Caco-2 (cell line): ENCODE measurements at regions of chr1 and their contacts with region 1.

Region 1: DNA sequence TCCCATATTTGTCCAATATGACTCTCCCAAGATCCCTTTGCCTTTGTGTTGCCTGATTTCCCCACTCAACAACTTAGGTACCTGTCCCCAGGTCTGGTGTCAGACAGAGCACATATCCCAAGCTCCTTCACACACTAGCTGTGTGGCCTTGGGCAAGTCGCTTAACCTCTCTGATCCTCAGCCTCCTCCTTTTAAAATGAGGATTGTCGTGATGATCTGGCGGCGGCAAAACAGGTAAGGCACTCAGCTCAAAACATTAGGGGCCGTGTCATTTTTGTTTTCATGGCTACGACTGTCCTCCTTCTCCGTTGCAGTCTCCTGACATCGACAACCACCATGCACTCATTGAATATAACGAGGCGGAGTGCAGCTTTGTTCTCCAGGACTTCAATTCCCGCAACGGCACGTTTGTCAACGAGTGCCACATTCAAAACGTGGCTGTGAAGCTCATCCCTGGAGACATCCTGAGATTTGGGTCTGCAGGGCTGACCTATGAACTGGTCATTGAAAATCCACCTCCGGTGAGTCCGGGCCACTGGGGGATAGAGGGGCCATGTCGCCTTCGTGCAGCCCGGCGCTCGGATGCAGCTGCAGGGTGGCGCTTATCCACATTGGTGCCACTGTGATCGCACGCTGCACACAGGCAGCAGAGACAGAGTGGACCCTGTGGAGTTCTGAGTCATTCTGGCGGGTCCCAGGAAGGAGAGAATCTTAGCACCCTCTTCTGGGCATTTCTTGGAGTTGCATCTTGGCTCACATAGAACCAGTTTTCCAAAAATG is 25.2 kb downstream of the FHAD1 start:
- DNase-seq: peak; percentile 66 to 72
- H3K4me3 ChIP-seq: no peak overlapping the region
- H3K4me3 Mint-ChIP-seq: peak overlapping the region; percentile 50
- H3K27ac Mint-ChIP-seq: no peak overlapping the region
- H3K4me1 ChIP-seq: no peaks in the 10 kb centered on the region
- H3K4me1 Mint-ChIP-seq: no peaks in the 10 kb centered on the region
- H3K27me3 ChIP-seq: no peaks in the 10 kb centered on the region
- H3K27me3 Mint-ChIP-seq: no peaks in the 10 kb centered on the region
- CTCF ChIP-seq: peak; percentile 67 to 78

Region 2: GRCh38 chr1:15128520-15129313 is 143.5 kb before region 1 on chr1:
- CTCF ChIA-PET with region 1: interaction called, 22 read pairs
- POLR2A ChIA-PET with region 1: no interaction called
- intact Hi-C with region 1: loop called (anchors 1 kb)
- DNase-seq: peak; percentile 72 to 82
- H3K4me3 ChIP-seq: no peak overlapping the region
- H3K4me3 Mint-ChIP-seq: no peak overlapping the region
- H3K27ac Mint-ChIP-seq: no peak overlapping the region
- H3K4me1 ChIP-seq: peaks cover 8% of the 10 kb centered on the region; the same call in 1 of the 2 replicates
- H3K4me1 Mint-ChIP-seq: no peaks in the 10 kb centered on the region
- H3K27me3 ChIP-seq: no peaks in the 10 kb centered on the region
- H3K27me3 Mint-ChIP-seq: no peaks in the 10 kb centered on the region
- CTCF ChIP-seq: peak; percentile 78 to 79

Region 3: GRCh38 chr1:15188130-15188524 is 84.1 kb before region 1 on chr1:
- CTCF ChIA-PET with region 1: interaction called, 3 read pairs
- POLR2A ChIA-PET with region 1: no interaction called
- intact Hi-C with region 1: loop called (anchors 2 kb)
- DNase-seq: no peak
- H3K4me3 ChIP-seq: no peak overlapping the region
- H3K4me3 Mint-ChIP-seq: no peak overlapping the region
- H3K27ac Mint-ChIP-seq: peak overlapping the region; percentile 75
- H3K4me1 ChIP-seq: peaks cover 78% of the 10 kb centered on the region
- H3K4me1 Mint-ChIP-seq: peaks cover 33% of the 10 kb centered on the region
- H3K27me3 ChIP-seq: no peaks in the 10 kb centered on the region
- H3K27me3 Mint-ChIP-seq: no peaks in the 10 kb centered on the region
- CTCF ChIP-seq: no peak

Region 4: GRCh38 chr1:15206418-15207030 is 65.7 kb before region 1 on chr1:
- CTCF ChIA-PET with region 1: no interaction called
- POLR2A ChIA-PET with region 1: no interaction called
- intact Hi-C with region 1: no loop called
- DNase-seq: no peak
- H3K4me3 ChIP-seq: no peak overlapping the region
- H3K4me3 Mint-ChIP-seq: no peak overlapping the region
- H3K27ac Mint-ChIP-seq: peak overlapping the region; percentile 53
- H3K4me1 ChIP-seq: 0 out of 2 replicates have a peak, but pooled peaks cover 6% of the 10 kb centered on the region
- H3K4me1 Mint-ChIP-seq: peaks cover 9% of the 10 kb centered on the region
- H3K27me3 ChIP-seq: no peaks in the 10 kb centered on the region
- H3K27me3 Mint-ChIP-seq: no peaks in the 10 kb centered on the region
- CTCF ChIP-seq: no peak

Region 5: DNA sequence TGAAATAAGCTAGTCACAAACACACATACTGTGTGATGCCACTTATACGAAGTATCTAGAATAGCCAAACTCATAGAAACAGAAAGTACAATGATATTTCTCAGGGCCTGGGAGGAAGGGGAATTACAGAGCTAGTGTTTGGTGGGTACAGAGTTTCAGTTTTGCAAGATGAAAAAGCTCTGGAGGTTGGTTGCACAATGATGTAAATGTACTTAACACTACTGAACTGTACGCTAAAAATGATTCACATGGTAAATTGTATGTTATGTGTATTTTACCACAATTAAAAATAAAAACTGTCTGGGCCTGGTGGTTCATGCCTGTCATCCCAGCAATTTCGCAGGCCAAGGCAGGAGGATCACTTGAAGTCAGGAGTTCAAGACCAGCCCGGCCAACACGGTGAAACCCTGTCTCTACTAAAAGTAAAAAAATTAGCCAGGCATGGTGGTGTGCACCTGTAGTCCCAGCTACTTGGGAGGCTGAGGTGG is 40.4 kb before region 1 on chr1:
- CTCF ChIA-PET with region 1: no interaction called
- POLR2A ChIA-PET with region 1: no interaction called
- intact Hi-C with region 1: no loop called
- DNase-seq: no peak
- H3K4me3 ChIP-seq: no peak overlapping the region
- H3K4me3 Mint-ChIP-seq: no peak overlapping the region
- H3K27ac Mint-ChIP-seq: no peak overlapping the region
- H3K4me1 ChIP-seq: no peaks in the 10 kb centered on the region
- H3K4me1 Mint-ChIP-seq: no peaks in the 10 kb centered on the region
- H3K27me3 ChIP-seq: no peaks in the 10 kb centered on the region
- H3K27me3 Mint-ChIP-seq: no peaks in the 10 kb centered on the region
- CTCF ChIP-seq: no peak

Region 6: GRCh38 chr1:15304701-15305467 is 32.7 kb after region 1 on chr1:
- CTCF ChIA-PET with region 1: no interaction called
- POLR2A ChIA-PET with region 1: no interaction called
- intact Hi-C with region 1: loop called (anchors 2 kb)
- DNase-seq: peak; percentile 50 to 69
- H3K4me3 ChIP-seq: no peak overlapping the region
- H3K4me3 Mint-ChIP-seq: no peak overlapping the region
- H3K27ac Mint-ChIP-seq: no peak overlapping the region
- H3K4me1 ChIP-seq: peaks cover 12% of the 10 kb centered on the region
- H3K4me1 Mint-ChIP-seq: no peaks in the 10 kb centered on the region
- H3K27me3 ChIP-seq: no peaks in the 10 kb centered on the region
- H3K27me3 Mint-ChIP-seq: no peaks in the 10 kb centered on the region
- CTCF ChIP-seq: peak; percentile 72 to 92